ENCODE measurements at regions of chr19 and their contacts with region 1.

Region 1: DNA sequence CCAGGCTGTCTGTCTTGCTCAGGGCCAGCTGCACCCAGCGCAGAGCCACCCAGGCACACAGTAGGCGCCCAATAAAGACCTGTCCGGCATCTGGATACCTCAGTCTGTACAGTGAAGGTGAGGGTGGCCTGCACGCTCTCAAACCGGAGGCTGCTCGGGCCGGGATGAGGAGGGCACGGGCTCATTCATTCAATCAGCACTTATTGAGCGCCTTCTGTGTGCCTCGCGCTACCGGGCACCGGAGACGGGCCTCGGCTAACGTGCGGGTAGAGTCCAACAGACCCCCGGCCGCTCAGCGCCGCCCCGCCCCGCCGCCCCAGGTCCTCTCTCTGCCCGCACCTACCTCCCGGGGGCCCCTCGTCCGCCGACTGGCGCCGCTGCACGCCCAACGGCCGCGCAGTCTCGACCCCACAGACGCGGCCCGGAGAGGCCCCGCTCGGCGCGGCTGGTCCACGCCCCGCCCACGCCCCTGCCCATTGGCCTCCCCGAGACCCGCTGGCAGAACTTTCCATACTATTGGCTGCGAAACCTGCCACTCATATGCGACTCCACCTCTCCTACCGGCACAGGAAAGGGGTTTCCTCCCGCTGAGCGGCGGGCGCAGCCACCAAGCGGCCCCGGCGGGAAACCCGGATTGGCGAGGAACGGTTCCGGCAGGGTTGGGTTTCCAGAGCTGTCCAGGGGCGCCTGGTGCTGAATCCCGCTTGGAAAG is at the start of gene SLC39A3:
- DNase-seq: peak; percentile 97 to 100 (median 99)
- ATAC-seq: peak; percentile 100
- H3K4me3 ChIP-seq: peak within 1 kb of the TSS; percentile 73
- H3K4me3 Mint-ChIP-seq: peak within 1 kb of the TSS; percentile 89
- H3K27ac ChIP-seq: no peak within 1 kb of the TSS
- H3K27ac Mint-ChIP-seq: peak within 1 kb of the TSS; percentile 40
- H3K4me1 ChIP-seq: peaks cover 19% of the 10 kb centered on the region
- H3K4me1 Mint-ChIP-seq: peaks cover 17% of the 10 kb centered on the region
- H3K27me3 ChIP-seq: peaks cover 4 to 5% of the 10 kb centered on the region in 2 experiments
- H3K27me3 Mint-ChIP-seq: peaks cover 21% of the 10 kb centered on the region
- CTCF ChIP-seq: no peak
- total RNA-seq, gene SLC39A3: 7.6 to 7.9 TPM

Region 2: GRCh38 chr19:1632462-1633268 is 1107.1 kb before region 1 on chr19:
- CTCF ChIA-PET with region 1: no interaction called
- POLR2A ChIA-PET with region 1: no interaction called
- intact Hi-C with region 1: no loop called
- DNase-seq: no peak
- ATAC-seq: no peak
- H3K4me3 ChIP-seq: no peak overlapping the region
- H3K4me3 Mint-ChIP-seq: no peak overlapping the region
- H3K27ac ChIP-seq: no peak overlapping the region
- H3K27ac Mint-ChIP-seq: no peak overlapping the region
- H3K4me1 ChIP-seq: no peaks in the 10 kb centered on the region
- H3K4me1 Mint-ChIP-seq: no peaks in the 10 kb centered on the region
- H3K27me3 ChIP-seq: no peaks in the 10 kb centered on the region
- H3K27me3 Mint-ChIP-seq: no peaks in the 10 kb centered on the region
- CTCF ChIP-seq: no peak

Region 3: GRCh38 chr19:2427429-2428320 is 312.1 kb before region 1 on chr19 and contains the start of gene TIMM13:
- CTCF ChIA-PET with region 1: no interaction called
- POLR2A ChIA-PET with region 1: no interaction called
- intact Hi-C with region 1: loop called in 1 of 2 experiments (anchors 2 kb)
- DNase-seq: peak; percentile 92 to 99 (median 96)
- ATAC-seq: peak; percentile 93
- H3K4me3 ChIP-seq: peak within 1 kb of the TSS; percentile 86
- H3K4me3 Mint-ChIP-seq: peak within 1 kb of the TSS; percentile 92
- H3K27ac ChIP-seq: peak within 1 kb of the TSS; percentile 91 to 98
- H3K27ac Mint-ChIP-seq: peak within 1 kb of the TSS; percentile 93
- H3K4me1 ChIP-seq: peaks cover 31% of the 10 kb centered on the region
- H3K4me1 Mint-ChIP-seq: peaks cover 15% of the 10 kb centered on the region
- H3K27me3 ChIP-seq: no peaks in the 10 kb centered on the region
- H3K27me3 Mint-ChIP-seq: no peaks in the 10 kb centered on the region
- CTCF ChIP-seq: no peak
- total RNA-seq, gene TIMM13: 17.3 to 22.3 TPM

Region 4: GRCh38 chr19:2455851-2456570 is 283.7 kb before region 1 on chr19:
- CTCF ChIA-PET with region 1: no interaction called
- POLR2A ChIA-PET with region 1: no interaction called
- intact Hi-C with region 1: loop called in 1 of 2 experiments (anchors 5 kb)
- DNase-seq: peak in 9 of 14 experiments; percentile 19 to 83 (median 42)
- ATAC-seq: peak; percentile 33
- H3K4me3 ChIP-seq: peak overlapping the region; percentile 74
- H3K4me3 Mint-ChIP-seq: peak overlapping the region; percentile 85
- H3K27ac ChIP-seq: no peak overlapping the region
- H3K27ac Mint-ChIP-seq: peak overlapping the region; percentile 30
- H3K4me1 ChIP-seq: peaks cover 25% of the 10 kb centered on the region
- H3K4me1 Mint-ChIP-seq: peaks cover 13% of the 10 kb centered on the region
- H3K27me3 ChIP-seq: no peaks in the 10 kb centered on the region
- H3K27me3 Mint-ChIP-seq: no peaks in the 10 kb centered on the region
- CTCF ChIP-seq: no peak

Region 5: DNA sequence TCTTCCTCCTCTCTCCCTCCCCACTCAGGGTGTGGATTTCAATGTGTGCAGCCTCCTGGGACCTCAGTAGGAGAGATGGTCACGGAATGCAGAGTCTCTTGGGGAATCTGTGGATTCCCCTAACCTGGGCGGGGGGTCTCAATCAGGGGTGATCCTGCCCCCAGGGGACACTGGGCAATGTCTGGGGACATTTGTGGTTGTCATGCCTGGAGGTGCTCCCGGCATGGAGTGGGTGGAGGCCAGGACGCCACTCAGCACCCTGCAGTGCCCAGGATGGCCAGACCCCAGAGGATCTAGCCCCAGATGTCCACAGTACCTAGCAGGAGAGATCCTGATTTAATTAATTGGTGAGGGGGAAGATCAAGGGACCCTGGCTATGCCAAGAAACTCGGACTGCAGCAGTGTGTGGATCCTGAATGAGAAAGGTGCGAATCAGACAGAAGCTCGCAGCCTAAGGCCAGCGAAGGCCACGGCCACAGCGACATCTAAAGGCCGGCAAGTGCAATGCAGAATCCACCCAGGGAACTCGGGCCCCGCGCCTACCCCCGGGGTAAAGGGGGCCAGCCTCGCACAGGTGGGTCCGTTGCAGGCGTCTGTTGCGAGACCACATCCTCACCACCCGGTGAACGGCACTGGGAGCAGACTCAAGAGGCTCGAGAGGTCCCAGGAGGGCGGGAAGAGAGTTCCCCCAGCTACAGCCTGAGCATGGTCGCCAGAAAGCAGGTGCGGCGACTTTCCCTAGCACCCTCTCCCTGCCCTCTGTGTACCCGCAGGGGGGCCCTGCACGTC is 126.1 kb before region 1 on chr19:
- CTCF ChIA-PET with region 1: no interaction called
- POLR2A ChIA-PET with region 1: no interaction called
- intact Hi-C with region 1: no loop called
- DNase-seq: peak; percentile 40 to 81 (median 54)
- ATAC-seq: peak; percentile 58
- H3K4me3 ChIP-seq: no peak overlapping the region
- H3K4me3 Mint-ChIP-seq: peak overlapping the region; percentile 48
- H3K27ac ChIP-seq: no peak overlapping the region
- H3K27ac Mint-ChIP-seq: no peak overlapping the region
- H3K4me1 ChIP-seq: peaks cover 55% of the 10 kb centered on the region
- H3K4me1 Mint-ChIP-seq: peaks cover 56% of the 10 kb centered on the region
- H3K27me3 ChIP-seq: no peaks in the 10 kb centered on the region
- H3K27me3 Mint-ChIP-seq: no peaks in the 10 kb centered on the region
- CTCF ChIP-seq: peak; percentile 84

Region 6: DNA sequence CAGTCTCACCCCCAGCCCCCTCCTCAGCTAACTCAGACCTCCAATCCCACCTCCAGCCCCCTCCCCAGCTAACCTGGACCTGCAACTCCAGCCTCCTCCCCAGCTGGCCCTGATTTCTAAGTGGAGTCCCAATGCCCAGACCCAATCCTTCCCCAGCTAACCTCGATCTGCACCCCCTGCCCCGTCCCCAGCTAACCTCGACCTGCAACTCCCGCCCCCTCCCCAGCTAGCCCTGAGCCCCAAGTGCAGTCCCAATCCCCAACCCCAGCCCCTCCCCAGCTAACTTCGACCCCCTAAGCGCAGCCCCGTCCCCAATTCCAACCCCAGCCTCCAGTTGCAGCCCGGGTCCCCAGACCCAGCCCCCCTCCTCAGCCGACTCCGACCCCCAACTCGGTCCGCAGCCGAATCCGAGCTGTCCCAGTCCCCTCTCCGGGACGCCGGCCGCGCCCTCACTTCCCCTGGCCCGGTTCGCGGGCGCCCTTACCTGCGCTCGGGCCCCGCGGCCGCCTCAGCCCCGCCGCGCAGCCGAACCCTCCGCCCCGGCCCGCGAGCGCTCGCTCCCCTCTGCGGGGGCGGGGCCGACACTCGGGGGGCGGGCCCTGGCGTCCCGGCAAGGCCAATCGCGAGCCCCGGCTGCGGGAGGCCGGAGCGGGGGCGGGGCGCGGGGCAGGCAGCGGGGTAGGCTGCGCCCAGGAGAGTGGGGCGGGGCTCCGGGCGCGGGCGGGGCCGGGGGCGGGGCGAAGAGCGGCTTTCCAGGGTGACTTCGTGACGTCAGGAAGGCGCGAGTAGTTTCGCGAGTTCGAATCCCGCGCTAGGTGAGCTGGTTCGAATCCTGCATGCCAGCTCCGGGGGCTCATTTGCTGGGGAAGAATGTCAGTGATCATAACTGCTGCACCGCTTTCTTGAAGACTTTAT is 37.3 kb before region 1 on chr19 and contains the start of gene GNG7:
- CTCF ChIA-PET with region 1: no interaction called
- POLR2A ChIA-PET with region 1: no interaction called
- intact Hi-C with region 1: loop called in 1 of 2 experiments (anchors 2 kb)
- DNase-seq: peak; percentile 89 to 98 (median 95)
- ATAC-seq: peak; percentile 100
- H3K4me3 ChIP-seq: peak within 1 kb of the TSS; percentile 55
- H3K4me3 Mint-ChIP-seq: peak within 1 kb of the TSS; percentile 57
- H3K27ac ChIP-seq: no peak within 1 kb of the TSS
- H3K27ac Mint-ChIP-seq: peak within 1 kb of the TSS; percentile 53
- H3K4me1 ChIP-seq: peaks cover 28% of the 10 kb centered on the region
- H3K4me1 Mint-ChIP-seq: peaks cover 40% of the 10 kb centered on the region
- H3K27me3 ChIP-seq: no peaks in the 10 kb centered on the region
- H3K27me3 Mint-ChIP-seq: no peaks in the 10 kb centered on the region
- CTCF ChIP-seq: no peak
- total RNA-seq, gene GNG7: 5.2 to 5.7 TPM

Region 7: GRCh38 chr19:2717638-2718541 is 21.9 kb before region 1 on chr19:
- CTCF ChIA-PET with region 1: no interaction called
- POLR2A ChIA-PET with region 1: no interaction called
- intact Hi-C with region 1: no loop called
- DNase-seq: no peak
- ATAC-seq: no peak
- H3K4me3 ChIP-seq: no peak overlapping the region
- H3K4me3 Mint-ChIP-seq: no peak overlapping the region
- H3K27ac ChIP-seq: no peak overlapping the region
- H3K27ac Mint-ChIP-seq: no peak overlapping the region
- H3K4me1 ChIP-seq: peaks cover 11% of the 10 kb centered on the region
- H3K4me1 Mint-ChIP-seq: peaks cover 15% of the 10 kb centered on the region
- H3K27me3 ChIP-seq: peaks cover 27 to 32% of the 10 kb centered on the region in 2 experiments
- H3K27me3 Mint-ChIP-seq: peaks cover 22% of the 10 kb centered on the region
- CTCF ChIP-seq: no peak

Region 8: DNA sequence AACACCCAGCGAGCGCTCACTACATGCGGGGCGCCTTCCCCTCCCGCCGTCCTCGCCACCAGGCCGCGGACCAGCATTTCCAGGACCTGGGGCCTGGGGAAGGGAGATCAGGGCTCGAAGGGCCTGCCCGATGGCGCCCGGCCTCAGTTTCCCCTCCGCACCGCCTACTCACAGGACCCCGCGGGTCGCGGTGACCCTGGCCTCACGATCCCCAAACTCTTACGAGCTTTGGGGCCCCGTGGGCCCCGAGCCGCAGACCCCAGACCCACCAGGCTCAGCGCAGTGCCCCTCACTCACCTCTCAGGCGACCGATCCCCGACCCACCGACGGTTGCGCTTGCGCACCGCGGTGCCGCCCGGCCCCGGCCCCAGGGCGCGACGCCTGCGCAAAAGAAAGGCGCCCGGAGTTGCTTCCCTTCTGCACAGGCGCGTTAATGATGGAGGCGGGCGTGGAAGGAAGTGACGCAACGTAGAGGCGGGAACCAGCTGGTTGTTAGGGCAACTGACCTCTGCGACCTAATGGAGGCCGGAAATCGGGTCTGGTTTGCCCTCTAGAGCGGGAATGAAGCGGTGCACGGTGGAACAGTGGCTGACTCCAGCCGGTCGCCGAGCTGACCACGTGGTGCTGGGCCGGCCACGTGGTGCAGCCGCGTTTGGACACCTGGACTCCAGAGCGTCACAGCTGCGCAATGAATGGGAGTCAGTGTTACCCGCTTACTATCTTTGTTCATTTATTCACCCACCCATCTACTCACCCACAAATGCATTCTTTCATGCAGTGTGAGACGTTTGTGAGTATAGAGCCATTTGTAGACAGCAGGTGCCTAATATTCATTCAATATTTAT is 43.4 kb after region 1 on chr19 and contains the start of gene SGTA:
- CTCF ChIA-PET with region 1: no interaction called
- POLR2A ChIA-PET with region 1: no interaction called
- intact Hi-C with region 1: loop called (anchors 1 to 2 kb)
- DNase-seq: peak; percentile 91 to 99 (median 95)
- ATAC-seq: peak; percentile 60
- H3K4me3 ChIP-seq: peak within 1 kb of the TSS; percentile 100
- H3K4me3 Mint-ChIP-seq: peak within 1 kb of the TSS; percentile 94
- H3K27ac ChIP-seq: peak within 1 kb of the TSS; percentile 79 to 90
- H3K27ac Mint-ChIP-seq: peak within 1 kb of the TSS; percentile 91
- H3K4me1 ChIP-seq: peaks cover 62% of the 10 kb centered on the region
- H3K4me1 Mint-ChIP-seq: peaks cover 54% of the 10 kb centered on the region
- H3K27me3 ChIP-seq: no peaks in the 10 kb centered on the region
- H3K27me3 Mint-ChIP-seq: no peaks in the 10 kb centered on the region
- CTCF ChIP-seq: peak; percentile 45
- total RNA-seq, gene SGTA: 28.3 to 29.7 TPM

Region 9: DNA sequence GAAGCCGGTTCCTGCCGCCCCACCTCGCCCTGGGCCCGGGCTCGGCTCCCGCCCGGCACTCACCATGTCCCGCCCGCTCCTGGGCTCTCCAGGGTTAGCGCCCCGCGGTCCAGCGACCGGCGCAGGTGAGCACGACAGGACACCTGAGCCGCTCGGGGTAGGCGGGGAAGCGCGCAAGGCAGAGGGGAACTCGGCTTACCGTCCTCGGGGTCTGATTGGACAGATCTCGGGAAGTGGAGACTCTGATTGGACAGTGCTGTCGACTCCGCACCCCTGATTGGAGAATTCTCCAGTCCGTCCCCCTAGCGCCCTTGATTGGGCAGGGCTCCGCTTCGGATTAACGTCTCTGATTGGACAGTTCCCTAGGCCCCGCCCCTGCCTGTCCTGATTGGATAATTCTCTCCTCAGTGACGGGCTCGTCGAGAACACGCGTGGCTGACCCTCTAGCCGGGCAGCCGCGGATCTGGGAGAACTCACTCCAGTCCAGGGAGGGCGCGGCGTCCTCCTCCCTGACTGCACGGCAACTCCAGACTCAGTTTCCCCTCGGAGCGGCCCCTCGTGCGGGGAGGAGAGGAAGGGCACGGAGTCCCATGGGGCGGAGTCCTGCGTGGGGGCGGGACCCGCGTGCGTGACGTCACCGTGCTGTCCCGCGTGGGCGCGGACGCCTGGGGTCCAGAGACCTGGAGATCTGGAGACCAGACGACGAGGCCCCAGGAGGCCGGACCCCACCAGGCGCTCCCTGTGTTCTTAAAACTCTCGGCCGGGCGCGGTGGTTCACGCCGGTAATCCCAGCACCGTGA is 205.2 kb after region 1 on chr19 and contains the start of gene ZNF77:
- CTCF ChIA-PET with region 1: no interaction called
- POLR2A ChIA-PET with region 1: no interaction called
- intact Hi-C with region 1: loop called in 1 of 2 experiments (anchors 5 kb)
- DNase-seq: peak; percentile 97 to 100 (median 99)
- ATAC-seq: peak; percentile 98
- H3K4me3 ChIP-seq: peak within 1 kb of the TSS; percentile 88
- H3K4me3 Mint-ChIP-seq: peak within 1 kb of the TSS; percentile 98
- H3K27ac ChIP-seq: peak within 1 kb of the TSS; percentile 78 to 90
- H3K27ac Mint-ChIP-seq: peak within 1 kb of the TSS; percentile 99
- H3K4me1 ChIP-seq: peaks cover 29% of the 10 kb centered on the region
- H3K4me1 Mint-ChIP-seq: peaks cover 28% of the 10 kb centered on the region
- H3K27me3 ChIP-seq: no peaks in the 10 kb centered on the region
- H3K27me3 Mint-ChIP-seq: no peaks in the 10 kb centered on the region
- CTCF ChIP-seq: no peak
- total RNA-seq, gene ZNF77: 2.0 to 2.4 TPM

Measured in CD4-positive, alpha-beta T cell (primary cell).